ENCODE measurements at regions of chr2 and their contacts with region 1.

Region 1: DNA sequence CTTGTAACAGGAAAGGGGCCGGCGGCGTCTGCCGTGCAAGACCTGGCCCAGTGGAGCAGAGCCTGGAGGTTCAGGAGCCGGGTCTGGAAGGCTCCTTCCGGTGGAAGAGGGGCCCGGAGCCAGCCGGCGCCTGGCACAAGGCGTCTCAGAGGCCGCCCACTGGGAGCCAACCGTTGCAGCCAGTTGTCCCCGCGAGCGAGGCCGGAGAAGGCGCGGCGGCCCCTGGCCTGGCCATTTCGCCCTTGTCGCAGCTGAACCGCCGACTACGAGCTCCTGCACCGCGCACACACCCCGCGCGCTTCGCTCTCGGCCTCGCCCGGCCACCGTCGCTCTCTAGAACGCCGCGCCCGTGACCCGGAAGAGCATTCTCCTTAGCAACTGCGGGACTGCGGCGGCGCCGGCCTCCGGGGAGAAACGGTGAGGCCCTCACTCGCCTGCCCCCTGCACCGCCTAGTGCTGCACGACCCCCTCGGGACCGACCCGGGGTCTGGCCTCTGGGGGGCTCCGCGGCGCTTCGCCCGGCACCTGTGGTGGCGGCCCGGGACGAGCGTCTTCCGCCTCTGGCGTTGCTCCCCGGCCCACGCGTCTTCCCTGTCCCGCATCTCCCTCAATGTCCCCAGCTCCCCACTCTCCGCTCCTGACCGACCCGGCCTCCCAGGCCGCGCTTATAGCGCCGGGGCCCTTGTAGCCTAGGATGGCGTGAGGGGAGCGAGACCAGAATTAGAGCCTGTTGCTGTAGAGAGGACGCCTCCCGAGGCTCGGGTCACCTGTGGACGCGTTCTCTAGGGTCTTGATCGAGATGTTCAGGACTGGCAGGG is at the start of gene DIS3L2:
- DNase-seq: peak; percentile 14
- H3K4me3 ChIP-seq: peak within 1 kb of the TSS; percentile 95
- H3K27me3 ChIP-seq: no peaks in the 10 kb centered on the region
- CTCF ChIP-seq: no peak
- polyA plus RNA-seq, gene DIS3L2: 8.2 and 12.4 TPM in 2 replicates

Region 2: GRCh38 chr2:231800493-231801091 is 161.0 kb before region 1 on chr2:
- CTCF ChIA-PET with region 1: no interaction called
- POLR2A ChIA-PET with region 1: no interaction called
- DNase-seq: no peak
- H3K4me3 ChIP-seq: no peak overlapping the region
- H3K27me3 ChIP-seq: no peaks in the 10 kb centered on the region
- CTCF ChIP-seq: peak; percentile 79

Region 3: DNA sequence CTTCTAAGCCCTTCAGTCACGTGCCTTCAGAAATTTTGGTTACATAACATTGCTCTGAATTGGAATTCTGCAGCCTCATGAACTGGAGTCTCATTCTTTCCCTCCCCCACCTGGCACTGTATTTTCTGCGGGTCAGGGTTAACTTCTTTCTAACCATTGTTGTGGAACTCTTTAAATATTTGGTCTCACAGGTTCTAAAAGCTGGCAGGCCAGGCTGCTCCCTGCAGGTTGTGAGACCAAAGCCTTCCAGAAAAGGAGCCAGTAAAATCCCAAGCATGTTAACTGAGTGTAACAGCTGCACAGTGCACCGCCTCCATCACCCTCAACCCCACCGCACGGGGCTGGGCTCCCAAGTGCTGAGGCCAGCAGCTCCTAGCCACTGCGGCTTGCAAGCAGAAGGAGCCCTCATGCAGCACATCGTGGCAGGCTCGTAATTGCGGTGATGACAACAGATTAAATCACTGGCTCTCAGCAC is 242.9 kb after region 1 on chr2:
- CTCF ChIA-PET with region 1: no interaction called
- POLR2A ChIA-PET with region 1: interaction called, 28 read pairs
- DNase-seq: no peak
- H3K4me3 ChIP-seq: no peak overlapping the region
- H3K27me3 ChIP-seq: no peaks in the 10 kb centered on the region
- CTCF ChIP-seq: no peak